ENCODE measurements at regions of chr3 and their contacts with region 1.

Region 1: GRCh38 chr3:171838218-171838761 is 4.9 kb upstream of the TMEM212 start:
- DNase-seq: peak; percentile 90
- ATAC-seq: peak; percentile 64
- H3K4me3 ChIP-seq: peak overlapping the region in 1 of 3 experiments; percentile 19; a peak in 1 of 6 replicates
- H3K27ac ChIP-seq: peak overlapping the region; percentile 100
- H3K4me1 ChIP-seq: peaks cover 97% of the 10 kb centered on the region
- H3K27me3 ChIP-seq: no peaks in the 10 kb centered on the region
- CTCF ChIP-seq: 0 out of 2 replicates have a peak, but pooled peaks have one; percentile 13
- EP300 ChIP-seq: peak; percentile 17 to 79; a peak in 2 of 4 replicates
- POLR2A ChIP-seq: 0 out of 4 replicates have a peak, but pooled peaks of 1 of the 2 experiments have one; percentile 33
- RAD21 ChIP-seq: no peak

Region 2: DNA sequence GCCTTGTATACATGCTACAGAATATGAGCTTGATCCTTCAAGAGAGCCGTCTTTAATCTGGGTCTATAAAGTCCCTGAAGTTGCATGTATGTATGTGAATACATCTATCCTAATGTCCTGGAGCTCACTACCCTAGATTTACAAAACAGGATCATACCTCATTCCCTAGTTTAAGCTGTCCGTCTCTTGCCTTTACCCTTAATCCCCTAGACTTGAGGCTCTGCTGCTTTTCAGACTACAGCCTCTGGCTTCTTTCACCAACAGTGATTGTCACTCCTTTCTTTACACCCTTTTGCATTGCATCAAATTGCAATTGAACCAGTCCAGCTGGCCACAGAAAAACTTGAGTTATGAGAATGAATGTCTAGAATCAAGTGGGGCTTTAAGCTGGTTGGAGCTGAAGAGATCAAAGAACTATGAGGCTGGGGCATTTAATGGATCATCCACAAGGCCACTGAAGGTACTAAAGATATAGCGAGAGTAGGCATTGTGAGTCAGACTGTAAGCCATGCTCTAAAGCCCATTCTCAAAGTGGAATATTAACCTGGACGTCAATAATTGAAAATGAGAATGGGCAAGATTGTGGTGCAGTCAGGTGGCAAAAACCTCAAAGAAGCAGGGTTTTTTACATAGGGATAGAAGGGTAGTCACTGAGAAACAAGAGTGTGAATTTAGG is 15.7 kb before region 1 on chr3:
- CTCF ChIA-PET with region 1: no interaction called
- POLR2A ChIA-PET with region 1: interaction called, 17 read pairs
- in situ Hi-C with region 1: no loop called
- intact Hi-C with region 1: no loop called
- DNase-seq: peak; percentile 83
- ATAC-seq: peak; percentile 92
- H3K4me3 ChIP-seq: no peak overlapping the region; a peak in 1 of 6 replicates
- H3K27ac ChIP-seq: peak overlapping the region; percentile 54
- H3K4me1 ChIP-seq: peaks cover 73% of the 10 kb centered on the region
- H3K27me3 ChIP-seq: no peaks in the 10 kb centered on the region
- CTCF ChIP-seq: no peak
- EP300 ChIP-seq: peak in 1 of 2 experiments; percentile 40; a peak in 1 of 4 replicates
- POLR2A ChIP-seq: no peak
- RAD21 ChIP-seq: no peak

Region 3: GRCh38 chr3:171895890-171896289 is 57.6 kb after region 1 on chr3:
- CTCF ChIA-PET with region 1: no interaction called
- POLR2A ChIA-PET with region 1: no interaction called
- in situ Hi-C with region 1: no loop called
- intact Hi-C with region 1: no loop called
- DNase-seq: no peak
- ATAC-seq: no peak
- H3K4me3 ChIP-seq: no peak overlapping the region
- H3K27ac ChIP-seq: no peak overlapping the region
- H3K4me1 ChIP-seq: peaks cover 24% of the 10 kb centered on the region
- H3K27me3 ChIP-seq: no peaks in the 10 kb centered on the region
- CTCF ChIP-seq: no peak
- EP300 ChIP-seq: no peak
- POLR2A ChIP-seq: no peak
- RAD21 ChIP-seq: no peak

Region 4: DNA sequence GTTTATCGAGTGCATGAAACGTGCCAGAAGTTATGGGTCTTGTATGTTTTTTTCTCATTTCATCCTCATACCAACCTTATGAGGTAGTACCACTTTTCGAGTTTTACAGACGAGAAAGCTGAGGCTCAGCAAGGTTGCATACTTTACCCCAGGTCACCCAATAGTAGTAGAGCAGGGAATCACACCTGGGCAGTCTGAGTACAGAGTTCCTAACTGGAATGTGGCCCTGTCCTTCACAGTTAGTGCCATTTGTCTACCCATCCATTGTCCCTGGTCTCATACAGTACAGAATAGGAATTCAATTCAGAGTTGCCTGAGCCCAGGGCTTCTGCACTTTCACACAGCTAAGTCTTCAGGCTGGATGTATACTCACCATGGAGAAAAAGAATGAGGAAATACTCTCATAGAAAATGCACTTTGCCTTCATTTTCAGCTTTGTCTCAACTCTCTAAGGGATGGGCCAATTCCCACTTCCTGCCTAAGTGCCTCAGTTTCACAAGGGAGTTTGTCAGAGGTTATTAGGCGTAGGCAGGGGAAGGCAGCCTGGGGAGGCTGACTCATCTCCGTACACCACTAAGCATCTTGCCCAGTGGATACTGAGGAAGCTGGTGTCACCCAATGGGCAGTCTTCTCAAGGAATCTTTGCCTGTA is 98.0 kb after region 1 on chr3:
- CTCF ChIA-PET with region 1: no interaction called
- POLR2A ChIA-PET with region 1: interaction called, 10 read pairs
- in situ Hi-C with region 1: no loop called
- intact Hi-C with region 1: no loop called
- DNase-seq: no peak
- ATAC-seq: no peak
- H3K4me3 ChIP-seq: no peak overlapping the region
- H3K27ac ChIP-seq: no peak overlapping the region
- H3K4me1 ChIP-seq: peaks cover 47% of the 10 kb centered on the region
- H3K27me3 ChIP-seq: no peaks in the 10 kb centered on the region
- CTCF ChIP-seq: no peak
- EP300 ChIP-seq: no peak
- POLR2A ChIP-seq: no peak
- RAD21 ChIP-seq: no peak

Region 5: DNA sequence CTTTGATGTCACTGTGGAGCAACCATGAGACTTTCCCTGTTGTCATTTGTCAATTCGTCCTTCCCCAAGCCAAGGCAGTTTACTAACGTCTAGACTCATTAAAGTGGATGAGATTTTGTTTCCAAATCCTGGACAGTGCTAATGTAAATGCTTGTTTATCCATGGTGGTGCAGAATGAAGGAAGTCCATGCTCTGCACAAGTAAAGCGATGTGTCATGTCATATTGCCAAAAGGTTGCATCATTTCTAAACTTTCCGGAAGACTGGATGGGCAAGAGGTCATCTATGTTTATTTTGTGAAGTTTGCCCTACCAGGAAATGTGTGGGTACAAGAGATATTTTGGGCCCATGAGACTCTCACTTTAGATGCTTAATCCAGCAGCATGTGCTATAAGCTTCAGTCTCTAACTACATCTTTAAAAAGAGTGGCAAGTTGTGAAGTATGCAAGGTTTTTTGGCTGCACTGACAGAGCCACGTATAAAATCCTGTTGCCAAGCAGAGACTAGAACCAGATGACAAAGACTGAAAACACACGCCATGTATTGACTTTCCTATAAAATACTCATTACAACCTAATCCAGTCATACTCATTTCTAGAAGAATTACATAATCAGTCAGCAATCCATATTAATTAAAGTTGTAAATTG is 129.0 kb after region 1 on chr3:
- CTCF ChIA-PET with region 1: no interaction called
- POLR2A ChIA-PET with region 1: interaction called, 36 read pairs
- in situ Hi-C with region 1: no loop called
- intact Hi-C with region 1: no loop called
- DNase-seq: peak; percentile 96
- ATAC-seq: peak; percentile 89
- H3K4me3 ChIP-seq: no peak overlapping the region; a peak in 1 of 6 replicates
- H3K27ac ChIP-seq: peak overlapping the region; percentile 90
- H3K4me1 ChIP-seq: peaks cover 69% of the 10 kb centered on the region
- H3K27me3 ChIP-seq: no peaks in the 10 kb centered on the region
- CTCF ChIP-seq: no peak
- EP300 ChIP-seq: peak in 1 of 2 experiments; percentile 99; a peak in 3 of 4 replicates
- POLR2A ChIP-seq: 0 out of 4 replicates have a peak, but pooled peaks of 1 of the 2 experiments have one; percentile 55
- RAD21 ChIP-seq: no peak

Measured in HepG2 (cell line).